Motor neuron (in vitro differentiated cells): ENCODE measurements at regions of chr6 and their contacts with region 1.

Region 1: GRCh38 chr6:50990750-50991446 is 172.2 kb downstream of the TFAP2B start:
- ATAC-seq: peak in 3 of 8 experiments; percentile 41 to 92 (median 51)
- H3K4me3 ChIP-seq: no peak overlapping the region
- H3K27ac ChIP-seq: no peak overlapping the region
- H3K4me1 ChIP-seq: no peaks in the 10 kb centered on the region

Region 2: GRCh38 chr6:50742161-50742560 is 248.7 kb before region 1 on chr6:
- in situ Hi-C with region 1: no loop called
- ATAC-seq: no peak
- H3K4me3 ChIP-seq: no peak overlapping the region
- H3K27ac ChIP-seq: no peak overlapping the region
- H3K4me1 ChIP-seq: no peaks in the 10 kb centered on the region

Region 3: DNA sequence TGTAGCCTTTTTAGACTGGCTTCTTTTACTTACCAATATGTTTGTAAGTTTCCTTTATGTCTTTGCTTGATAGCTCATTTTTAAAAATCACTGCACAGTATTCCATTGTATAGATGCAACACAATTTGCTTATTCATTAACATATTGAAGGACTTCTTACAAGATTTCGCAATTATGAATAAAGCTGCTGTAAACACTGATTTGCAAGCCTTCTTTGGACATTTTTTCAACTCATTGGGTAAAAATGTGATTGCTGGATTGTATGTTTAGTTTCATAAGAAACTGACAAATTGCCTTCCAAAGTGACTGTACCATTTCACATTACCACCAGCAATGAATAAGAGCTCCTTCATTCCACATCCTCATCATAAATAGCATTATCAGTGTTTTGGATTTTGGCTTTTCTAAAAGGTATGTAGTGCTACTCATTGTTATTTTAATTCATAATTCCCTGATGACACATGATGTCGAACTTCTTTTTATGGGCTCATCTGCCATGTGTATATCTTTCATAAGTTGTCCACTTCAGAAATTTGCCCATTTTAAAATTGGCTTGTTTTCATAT is 91.5 kb before region 1 on chr6:
- in situ Hi-C with region 1: loop called in 1 of 9 experiments (anchors 25 kb)
- ATAC-seq: peak in 3 of 8 experiments; percentile 49 to 81 (median 60)
- H3K4me3 ChIP-seq: no peak overlapping the region
- H3K27ac ChIP-seq: no peak overlapping the region
- H3K4me1 ChIP-seq: no peaks in the 10 kb centered on the region